OCI-LY7 (cell line): ENCODE measurements at regions of chr4 and their contacts with region 1.

Region 1: DNA sequence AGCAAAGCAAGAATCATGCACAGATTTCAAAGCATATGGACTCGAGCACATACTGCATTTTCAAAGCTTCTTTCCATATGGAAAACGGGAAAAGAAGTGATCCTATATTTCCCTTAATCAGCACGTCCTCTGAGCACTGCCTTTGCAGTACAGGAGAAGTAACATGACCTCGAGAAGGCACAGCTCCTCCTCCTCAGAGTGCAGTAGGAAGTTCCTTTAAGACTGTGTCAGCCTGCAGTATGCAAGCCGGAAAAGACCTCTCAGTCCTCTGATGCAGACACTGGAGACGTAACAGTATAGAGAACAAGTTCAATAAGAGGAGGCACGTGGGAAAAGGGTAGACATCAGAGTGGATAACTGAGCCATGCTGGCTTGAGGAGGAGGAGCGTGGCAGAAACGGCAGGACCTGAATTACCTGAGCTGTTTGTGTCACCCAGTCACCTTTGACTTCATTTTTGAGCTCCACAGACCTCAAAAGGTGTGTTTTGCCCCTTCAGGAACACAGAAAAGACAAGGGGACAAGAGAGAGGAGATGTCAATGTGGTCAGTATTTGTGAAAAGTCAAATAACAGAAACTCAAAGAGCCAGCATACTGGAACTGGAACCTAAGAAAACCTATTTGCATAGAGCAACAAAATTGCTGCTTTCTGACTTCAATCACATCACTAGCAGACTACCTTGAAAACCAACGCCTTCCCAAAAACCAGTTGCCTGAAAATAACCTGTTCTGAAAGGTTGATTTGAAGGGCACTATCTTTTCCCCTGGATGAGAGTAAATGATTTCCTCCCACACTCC is 20.8 kb downstream of the IRF2 start:
- DNase-seq: peak; percentile 74
- H3K4me3 ChIP-seq: peak overlapping the region; percentile 29
- H3K27ac ChIP-seq: peak overlapping the region; percentile 33
- H3K4me1 ChIP-seq: peaks cover 61% of the 10 kb centered on the region
- CTCF ChIP-seq: no peak

Region 2: GRCh38 chr4:183758061-183758757 is 695.4 kb before region 1 on chr4:
- CTCF ChIA-PET with region 1: no interaction called
- POLR2A ChIA-PET with region 1: no interaction called
- intact Hi-C with region 1: no loop called
- DNase-seq: no peak
- H3K4me3 ChIP-seq: no peak overlapping the region
- H3K27ac ChIP-seq: no peak overlapping the region
- H3K4me1 ChIP-seq: no peaks in the 10 kb centered on the region
- CTCF ChIP-seq: no peak

Region 3: GRCh38 chr4:184437565-184438265 is 15.8 kb before region 1 on chr4:
- CTCF ChIA-PET with region 1: interaction called, 3 read pairs
- POLR2A ChIA-PET with region 1: interaction called, 12 read pairs
- intact Hi-C with region 1: no loop called
- DNase-seq: peak; percentile 37
- H3K4me3 ChIP-seq: no peak overlapping the region
- H3K27ac ChIP-seq: no peak overlapping the region
- H3K4me1 ChIP-seq: peaks cover 6% of the 10 kb centered on the region
- CTCF ChIP-seq: 0 out of 2 replicates have a peak, but pooled peaks have one; percentile 16

Region 4: DNA sequence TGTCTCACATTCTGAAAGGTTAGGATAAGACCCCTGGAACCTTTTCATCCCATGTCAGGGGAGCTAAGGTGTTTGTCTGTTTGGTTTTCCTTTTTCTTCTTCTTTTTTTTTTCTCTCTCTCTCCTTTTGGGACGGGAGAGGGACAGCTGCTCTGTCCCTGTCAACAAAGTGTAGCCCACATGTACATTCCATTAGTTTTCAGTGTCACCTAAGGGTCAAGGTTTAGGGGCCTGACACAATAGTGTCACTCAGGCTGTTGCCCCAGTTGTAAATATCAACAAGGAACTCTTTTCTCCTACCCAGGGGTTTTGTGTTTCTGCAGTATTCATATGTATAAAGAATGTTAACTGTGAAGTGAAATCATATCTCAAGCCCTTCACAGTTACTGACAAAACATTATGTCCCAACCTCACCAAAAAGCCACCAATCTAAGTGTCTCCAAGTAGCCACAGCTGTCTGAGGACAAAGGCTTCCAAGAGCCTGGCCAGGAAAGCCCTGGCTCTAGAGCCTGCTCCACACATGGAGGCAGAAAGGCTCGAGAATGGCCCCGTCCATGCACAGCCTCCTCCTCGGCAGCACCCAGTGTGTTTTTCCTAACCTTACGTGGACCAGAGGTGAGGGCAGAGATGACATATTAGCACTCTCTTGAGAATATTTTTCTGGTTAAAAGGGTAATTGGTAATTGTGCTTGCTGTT is 11.3 kb after region 1 on chr4:
- CTCF ChIA-PET with region 1: interaction called, 3 read pairs
- POLR2A ChIA-PET with region 1: interaction called, 10 read pairs
- intact Hi-C with region 1: no loop called
- DNase-seq: no peak
- H3K4me3 ChIP-seq: no peak overlapping the region
- H3K27ac ChIP-seq: no peak overlapping the region
- H3K4me1 ChIP-seq: peaks cover 42% of the 10 kb centered on the region
- CTCF ChIP-seq: no peak